MCF 10A (cell line): ENCODE measurements at regions of chr10 and their contacts with region 1.

Region 1: DNA sequence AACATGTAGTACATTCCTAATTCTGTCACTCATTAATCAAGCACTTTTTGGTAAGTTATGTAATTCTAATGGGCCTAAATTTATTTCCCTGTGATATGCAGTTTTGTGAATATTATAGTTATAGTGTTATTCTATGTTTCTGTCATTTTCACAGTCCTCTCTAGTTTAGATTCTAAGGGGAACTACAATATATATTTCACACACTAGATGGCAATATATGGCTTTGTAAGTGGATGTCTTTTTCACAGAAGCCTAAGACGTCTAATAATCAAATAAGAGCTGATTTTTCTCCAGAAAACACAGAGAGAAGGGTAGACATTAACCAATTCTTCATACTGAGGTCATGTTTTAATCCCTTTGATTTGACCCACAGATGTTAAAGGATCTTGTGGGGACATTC is 18.0 kb downstream of the RNLS start:
- DNase-seq: peak; percentile 35
- H3K4me3 Mint-ChIP-seq: no peak overlapping the region
- H3K27ac Mint-ChIP-seq: no peak overlapping the region
- H3K4me1 Mint-ChIP-seq: no peaks in the 10 kb centered on the region
- H3K27me3 Mint-ChIP-seq: peaks cover 17% of the 10 kb centered on the region
- CTCF ChIP-seq: peak; percentile 48

Region 2: GRCh38 chr10:88372051-88372715 is 192.9 kb before region 1 on chr10:
- CTCF ChIA-PET with region 1: no interaction called
- POLR2A ChIA-PET with region 1: no interaction called
- intact Hi-C with region 1: no loop called
- DNase-seq: no peak
- H3K4me3 Mint-ChIP-seq: no peak overlapping the region
- H3K27ac Mint-ChIP-seq: no peak overlapping the region
- H3K4me1 Mint-ChIP-seq: no peaks in the 10 kb centered on the region
- H3K27me3 Mint-ChIP-seq: no peaks in the 10 kb centered on the region
- CTCF ChIP-seq: no peak

Region 3: DNA sequence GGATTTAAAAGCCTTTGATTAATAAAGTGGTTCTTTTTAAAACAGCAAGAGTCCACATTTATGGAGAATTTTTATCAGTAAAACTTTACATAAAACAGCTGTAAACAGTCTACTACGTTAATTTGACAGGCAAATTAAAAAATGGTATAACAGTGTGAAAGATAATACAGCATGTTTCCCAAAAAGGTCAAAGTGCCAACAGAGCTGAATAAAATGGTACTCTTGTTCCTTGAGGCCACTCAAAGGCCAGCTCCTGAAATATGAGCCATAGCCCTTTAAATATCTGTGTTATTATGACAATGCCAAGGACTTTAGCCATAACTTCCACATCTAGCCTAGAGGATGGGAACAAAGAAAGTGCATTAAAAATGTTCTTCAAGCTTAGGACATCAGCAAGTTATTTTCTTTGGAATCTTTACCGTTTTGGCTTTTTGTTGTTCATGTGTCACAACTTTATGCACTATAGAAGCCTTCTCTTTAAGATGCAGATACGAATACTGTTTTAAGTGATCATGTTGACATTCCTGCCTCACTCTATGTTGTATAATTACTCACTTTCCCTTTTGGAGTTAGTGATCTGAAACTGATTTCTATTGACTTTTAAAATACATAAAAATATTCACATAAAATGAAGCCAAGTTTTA is 147.6 kb before region 1 on chr10:
- CTCF ChIA-PET with region 1: no interaction called
- POLR2A ChIA-PET with region 1: no interaction called
- intact Hi-C with region 1: no loop called
- DNase-seq: no peak
- H3K4me3 Mint-ChIP-seq: no peak overlapping the region
- H3K27ac Mint-ChIP-seq: no peak overlapping the region
- H3K4me1 Mint-ChIP-seq: no peaks in the 10 kb centered on the region
- H3K27me3 Mint-ChIP-seq: no peaks in the 10 kb centered on the region
- CTCF ChIP-seq: no peak

Region 4: DNA sequence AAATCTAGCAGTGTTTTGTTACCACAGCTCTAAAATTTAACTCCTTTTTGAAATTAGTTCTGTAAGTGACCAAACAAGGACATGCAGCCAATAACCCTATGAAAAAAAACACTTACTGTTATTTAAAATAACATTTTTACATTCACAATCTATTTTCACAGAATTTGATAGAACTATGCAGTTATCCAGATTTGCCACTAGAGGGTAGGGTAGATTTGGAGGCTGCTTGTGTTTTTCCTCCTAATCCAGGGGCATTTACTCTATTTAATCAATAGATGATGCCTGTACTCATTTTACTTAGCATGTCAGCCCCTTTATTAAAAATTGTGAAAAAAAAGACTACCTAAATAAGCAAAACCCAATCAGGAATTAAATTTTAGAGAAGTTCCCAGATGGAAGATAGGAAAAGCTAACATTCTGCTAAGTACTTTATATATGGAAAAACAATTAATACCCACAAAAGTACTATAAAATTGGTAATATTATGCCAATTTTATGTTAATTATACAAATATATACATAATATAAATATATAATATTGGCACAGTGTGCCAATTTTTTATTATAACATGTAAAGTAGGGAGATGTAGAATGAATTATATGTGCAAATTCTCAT is 122.9 kb after region 1 on chr10:
- CTCF ChIA-PET with region 1: interaction called, 7 read pairs
- POLR2A ChIA-PET with region 1: interaction called, 3 read pairs
- intact Hi-C with region 1: loop called (anchors 1 kb)
- DNase-seq: peak; percentile 40
- H3K4me3 Mint-ChIP-seq: no peak overlapping the region
- H3K27ac Mint-ChIP-seq: no peak overlapping the region
- H3K4me1 Mint-ChIP-seq: no peaks in the 10 kb centered on the region
- H3K27me3 Mint-ChIP-seq: no peaks in the 10 kb centered on the region
- CTCF ChIP-seq: peak; percentile 75

Region 5: GRCh38 chr10:88865281-88865876 is 300.3 kb after region 1 on chr10:
- CTCF ChIA-PET with region 1: no interaction called
- POLR2A ChIA-PET with region 1: no interaction called
- intact Hi-C with region 1: loop called (anchors 5 kb)
- DNase-seq: peak; percentile 53
- H3K4me3 Mint-ChIP-seq: no peak overlapping the region
- H3K27ac Mint-ChIP-seq: no peak overlapping the region
- H3K4me1 Mint-ChIP-seq: peaks cover 4% of the 10 kb centered on the region
- H3K27me3 Mint-ChIP-seq: no peaks in the 10 kb centered on the region
- CTCF ChIP-seq: peak; percentile 25